Sciatic nerve (tissue), 2 donors: ENCODE measurements at regions of chr3 and their contacts with region 1.

Region 1: DNA sequence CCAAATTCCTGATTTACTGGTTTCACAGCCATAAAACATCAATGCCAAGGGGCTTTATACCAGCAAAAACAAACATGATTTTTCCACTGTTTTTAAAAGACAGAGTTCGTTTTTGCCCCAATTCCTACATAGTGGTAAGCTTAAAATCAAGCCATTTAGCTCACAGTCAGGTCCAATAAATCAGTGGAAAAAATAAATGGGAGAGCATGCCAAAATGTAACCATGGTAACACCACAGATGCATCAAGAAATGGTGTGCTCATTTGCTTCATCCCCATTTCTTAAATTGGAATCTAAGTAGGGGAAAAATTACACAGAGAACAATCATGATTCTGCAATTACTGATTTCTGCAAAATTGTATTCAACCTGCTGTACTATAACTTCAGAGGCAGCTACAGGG is 418.8 kb downstream of the MAGI1 start:
- DNase-seq: no peak
- ATAC-seq: no peak

Region 2: GRCh38 chr3:65685621-65686235 is 65.8 kb after region 1 on chr3:
- intact Hi-C with region 1: loop called (anchors 2 kb)
- DNase-seq: no peak
- ATAC-seq: no peak

Region 3: GRCh38 chr3:66554178-66554577 is 934.3 kb after region 1 on chr3:
- intact Hi-C with region 1: no loop called
- DNase-seq: no peak
- ATAC-seq: peak; percentile 22